BJ (cell line): ENCODE measurements at regions of chr15 and their contacts with region 1.

Region 1: DNA sequence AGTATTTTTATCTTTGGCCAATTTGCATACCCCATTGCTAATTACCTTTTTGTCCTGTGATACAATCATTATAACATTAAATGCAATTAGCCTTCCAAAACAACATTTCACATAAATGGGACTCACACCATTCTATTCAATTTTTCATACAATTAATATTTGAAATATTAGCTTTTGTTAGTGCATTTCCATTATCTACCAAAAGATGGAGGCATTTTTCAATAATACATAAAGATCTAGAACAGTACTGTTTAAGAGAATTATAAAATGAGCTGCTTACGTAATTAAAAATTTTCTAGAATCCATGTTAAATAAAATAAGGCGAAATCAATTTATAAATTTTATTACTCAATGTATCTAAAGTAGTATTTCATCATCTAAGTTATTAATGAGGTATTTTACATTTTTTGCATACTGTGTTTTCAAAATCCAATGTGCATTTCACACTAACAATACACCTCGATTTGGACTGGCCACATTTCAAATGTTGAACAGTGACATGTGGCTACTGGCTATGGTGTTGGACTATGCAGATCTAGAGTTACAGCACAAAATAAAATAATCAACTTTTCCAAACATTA is 74.3 kb downstream of the TJP1 start:
- DNase-seq: no peak
- H3K4me3 ChIP-seq: no peak overlapping the region
- H3K27me3 ChIP-seq: no peaks in the 10 kb centered on the region
- CTCF ChIP-seq: peak; percentile 34

Region 2: DNA sequence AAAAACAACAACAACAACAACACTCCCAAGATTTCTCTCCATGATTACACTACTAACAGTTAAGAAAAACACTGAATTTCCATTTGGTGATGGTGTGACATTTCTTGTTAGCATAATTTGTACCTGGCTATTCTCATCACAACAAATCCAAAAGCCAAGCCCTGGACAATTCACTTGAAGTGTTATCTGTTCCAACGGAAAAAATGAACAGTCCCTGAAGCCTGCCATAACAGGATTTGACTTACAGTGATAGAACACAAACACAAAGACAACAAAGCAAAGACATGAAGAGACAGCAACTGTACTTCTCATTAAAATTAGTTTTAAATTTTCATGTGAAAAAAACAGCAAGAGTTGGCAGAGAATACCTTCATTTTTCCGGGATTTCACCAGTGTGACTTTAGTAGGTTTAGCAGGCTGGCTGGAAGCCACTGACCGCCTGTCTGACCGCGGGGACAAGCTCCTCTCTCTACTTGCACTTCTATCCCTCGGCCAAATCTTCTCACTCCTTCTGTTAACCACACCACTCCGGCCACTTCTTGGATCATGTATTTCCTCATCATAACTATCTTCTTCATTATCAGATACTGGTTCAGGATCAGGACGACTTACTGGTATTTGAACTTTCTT is 18.1 kb after region 1 on chr15:
- CTCF ChIA-PET with region 1: no interaction called
- POLR2A ChIA-PET with region 1: no interaction called
- DNase-seq: no peak
- H3K4me3 ChIP-seq: no peak overlapping the region
- H3K27me3 ChIP-seq: no peaks in the 10 kb centered on the region
- CTCF ChIP-seq: no peak

Region 3: DNA sequence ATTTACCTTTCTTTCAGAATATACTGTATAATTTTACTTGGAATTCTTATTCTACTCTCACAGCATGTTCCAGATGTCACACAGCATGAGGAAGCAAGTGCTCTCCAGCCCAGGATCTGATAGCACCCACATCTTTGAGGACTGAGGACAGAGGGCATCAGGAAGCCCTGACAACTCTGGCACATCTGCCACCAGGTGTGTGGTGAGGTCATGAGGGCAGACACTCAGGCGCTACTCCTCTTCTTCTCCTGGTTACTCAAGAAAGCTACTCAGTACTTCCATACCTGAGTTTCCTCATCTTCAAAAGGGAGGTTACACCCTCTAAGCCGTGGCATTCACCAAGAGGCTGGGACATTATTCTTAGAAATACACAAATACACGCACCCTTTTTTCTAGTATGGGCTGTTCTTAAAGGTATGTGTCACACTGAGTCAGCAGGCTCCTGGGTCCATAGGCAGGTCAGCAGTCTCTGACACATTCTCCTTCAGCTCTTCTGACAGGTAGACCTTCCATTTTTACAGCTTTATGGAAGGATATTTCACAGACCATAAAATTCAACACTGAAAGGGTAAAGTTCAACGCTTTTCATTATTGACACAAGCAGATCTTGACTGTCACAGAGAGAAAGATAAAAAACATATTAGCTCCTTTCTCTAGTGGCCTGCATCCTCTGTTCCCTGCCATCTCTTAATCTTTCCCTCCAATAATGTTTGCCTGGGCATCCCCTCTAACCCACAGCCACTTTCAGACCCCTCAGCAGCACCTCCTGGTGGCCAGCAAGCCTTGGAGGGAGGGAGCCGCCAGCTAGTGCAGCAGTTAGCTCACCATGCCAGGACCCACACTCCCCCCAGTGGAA is 177.5 kb after region 1 on chr15:
- CTCF ChIA-PET with region 1: interaction called, 21 read pairs
- POLR2A ChIA-PET with region 1: interaction called, 3 read pairs
- DNase-seq: no peak
- H3K4me3 ChIP-seq: no peak overlapping the region
- H3K27me3 ChIP-seq: no peaks in the 10 kb centered on the region
- CTCF ChIP-seq: peak; percentile 79

Region 4: GRCh38 chr15:30043211-30043655 is 295.3 kb after region 1 on chr15:
- CTCF ChIA-PET with region 1: interaction called, 11 read pairs
- POLR2A ChIA-PET with region 1: no interaction called
- DNase-seq: no peak
- H3K4me3 ChIP-seq: no peak overlapping the region
- H3K27me3 ChIP-seq: no peaks in the 10 kb centered on the region
- CTCF ChIP-seq: 0 out of 2 replicates have a peak, but pooled peaks have one; percentile 24